Sigmoid colon (tissue), 7 donors: ENCODE measurements at regions of chr1 and their contacts with region 1.

Region 1: GRCh38 chr1:209207701-209208286 is 375.7 kb upstream of the CAMK1G start:
- DNase-seq: peak; percentile 79
- H3K4me3 ChIP-seq: peak overlapping the region in 3 of 4 donors; percentile 21 to 37 (median 36)
- H3K27ac ChIP-seq: no peak overlapping the region
- H3K4me1 ChIP-seq: peaks cover 0 to 16% (median 12%) of the 10 kb centered on the region in 4 donors
- H3K27me3 ChIP-seq: peaks cover 0 to 24% (median 4%) of the 10 kb centered on the region in 3 donors
- CTCF ChIP-seq: peak; percentile 32 to 64 (median 41)
- EP300 ChIP-seq: no peak
- POLR2A ChIP-seq: no peak

Region 2: GRCh38 chr1:209354111-209354839 is 146.5 kb after region 1 on chr1:
- intact Hi-C with region 1: loop called (anchors 2 kb)
- DNase-seq: peak; percentile 84
- H3K4me3 ChIP-seq: no peak overlapping the region
- H3K27ac ChIP-seq: no peak overlapping the region
- H3K4me1 ChIP-seq: peaks cover 0 to 27% (median 12%) of the 10 kb centered on the region in 4 donors
- H3K27me3 ChIP-seq: no peaks in the 10 kb centered on the region
- CTCF ChIP-seq: peak; percentile 35 to 81 (median 60)
- EP300 ChIP-seq: no peak
- POLR2A ChIP-seq: no peak

Region 3: GRCh38 chr1:209565759-209566678 is 358.2 kb after region 1 on chr1:
- intact Hi-C with region 1: loop called (anchors 10 kb)
- DNase-seq: peak; percentile 83
- H3K4me3 ChIP-seq: no peak overlapping the region
- H3K27ac ChIP-seq: no peak overlapping the region
- H3K4me1 ChIP-seq: peaks cover 0 to 7% (median 3%) of the 10 kb centered on the region in 4 donors
- H3K27me3 ChIP-seq: peaks cover 0 to 13% (median 0%) of the 10 kb centered on the region in 3 donors
- CTCF ChIP-seq: peak; percentile 12 to 66 (median 41)
- EP300 ChIP-seq: no peak
- POLR2A ChIP-seq: no peak